PC-3 (cell line): ENCODE measurements at regions of chr15 and their contacts with region 1.

Region 1: GRCh38 chr15:78299101-78299930 is at the start of gene SKIC8:
- DNase-seq: peak; percentile 96
- ATAC-seq: peak; percentile 95
- H3K4me3 ChIP-seq: peak within 1 kb of the TSS; percentile 98
- H3K27ac ChIP-seq: peak within 1 kb of the TSS; percentile 56
- H3K4me1 ChIP-seq: peaks cover 33% of the 10 kb centered on the region
- H3K27me3 ChIP-seq: no peaks in the 10 kb centered on the region
- CTCF ChIP-seq: no peak
- total RNA-seq, gene SKIC8: 54.7 and 56.1 TPM in 2 replicates

Region 2: DNA sequence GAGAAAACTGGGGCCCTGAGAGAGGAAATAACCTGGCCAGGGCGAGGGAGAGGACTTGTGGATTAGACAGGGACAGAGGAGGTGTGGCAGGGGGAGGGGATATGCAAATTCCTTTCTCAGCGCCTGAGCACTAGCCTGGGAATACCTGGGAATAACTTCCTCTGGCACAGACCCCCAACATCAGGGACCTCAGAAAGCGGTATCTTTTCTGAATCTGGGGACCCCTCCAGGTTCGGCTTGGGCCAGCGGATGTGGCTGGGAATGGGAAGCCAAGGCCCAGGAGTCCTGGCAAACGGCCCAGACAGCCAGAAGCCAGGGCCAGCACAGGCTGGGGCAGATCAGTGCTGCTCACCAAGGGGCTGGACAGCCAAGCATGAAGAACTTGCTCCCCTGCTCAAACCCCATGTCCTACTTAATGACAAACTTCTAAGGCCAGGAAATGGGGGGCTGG is 55.8 kb before region 1 on chr15:
- CTCF ChIA-PET with region 1: no interaction called
- POLR2A ChIA-PET with region 1: no interaction called
- intact Hi-C with region 1: no loop called
- DNase-seq: no peak
- ATAC-seq: no peak
- H3K4me3 ChIP-seq: no peak overlapping the region
- H3K27ac ChIP-seq: no peak overlapping the region
- H3K4me1 ChIP-seq: no peaks in the 10 kb centered on the region
- H3K27me3 ChIP-seq: no peaks in the 10 kb centered on the region
- CTCF ChIP-seq: no peak

Region 3: GRCh38 chr15:78265752-78266593 is 33.3 kb before region 1 on chr15:
- CTCF ChIA-PET with region 1: no interaction called
- POLR2A ChIA-PET with region 1: interaction called, 10 read pairs
- intact Hi-C with region 1: no loop called
- DNase-seq: peak; percentile 66
- ATAC-seq: peak; percentile 89
- H3K4me3 ChIP-seq: peak overlapping the region; percentile 68
- H3K27ac ChIP-seq: no peak overlapping the region
- H3K4me1 ChIP-seq: peaks cover 20% of the 10 kb centered on the region
- H3K27me3 ChIP-seq: peaks cover 8% of the 10 kb centered on the region
- CTCF ChIP-seq: no peak

Region 4: DNA sequence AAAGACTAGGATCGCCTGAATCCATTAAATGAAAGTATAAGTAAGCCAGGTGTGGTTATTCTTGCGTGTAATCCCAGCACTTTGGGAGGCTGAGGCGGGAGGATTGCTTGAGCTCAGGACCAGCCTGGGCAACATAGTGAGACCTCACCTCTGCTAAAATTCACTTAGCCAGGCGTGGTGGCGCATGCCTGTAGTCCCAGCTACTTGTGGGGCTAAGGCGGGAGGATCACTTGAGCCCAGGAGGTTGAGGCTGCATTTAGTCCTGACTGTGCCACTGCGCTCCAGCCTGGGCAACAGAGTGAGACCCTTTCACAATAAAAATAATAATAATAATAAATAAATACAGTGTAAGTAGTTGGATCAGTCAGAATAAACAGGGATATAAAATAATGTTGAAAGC is 182.6 kb after region 1 on chr15:
- CTCF ChIA-PET with region 1: no interaction called
- POLR2A ChIA-PET with region 1: no interaction called
- intact Hi-C with region 1: no loop called
- DNase-seq: no peak
- ATAC-seq: no peak
- H3K4me3 ChIP-seq: no peak overlapping the region
- H3K27ac ChIP-seq: no peak overlapping the region
- H3K4me1 ChIP-seq: no peaks in the 10 kb centered on the region
- H3K27me3 ChIP-seq: no peaks in the 10 kb centered on the region
- CTCF ChIP-seq: no peak